Right ventricle myocardium inferior (tissue), 1 donor: ENCODE measurements at regions of chr7 and their contacts with region 1.

Region 1: DNA sequence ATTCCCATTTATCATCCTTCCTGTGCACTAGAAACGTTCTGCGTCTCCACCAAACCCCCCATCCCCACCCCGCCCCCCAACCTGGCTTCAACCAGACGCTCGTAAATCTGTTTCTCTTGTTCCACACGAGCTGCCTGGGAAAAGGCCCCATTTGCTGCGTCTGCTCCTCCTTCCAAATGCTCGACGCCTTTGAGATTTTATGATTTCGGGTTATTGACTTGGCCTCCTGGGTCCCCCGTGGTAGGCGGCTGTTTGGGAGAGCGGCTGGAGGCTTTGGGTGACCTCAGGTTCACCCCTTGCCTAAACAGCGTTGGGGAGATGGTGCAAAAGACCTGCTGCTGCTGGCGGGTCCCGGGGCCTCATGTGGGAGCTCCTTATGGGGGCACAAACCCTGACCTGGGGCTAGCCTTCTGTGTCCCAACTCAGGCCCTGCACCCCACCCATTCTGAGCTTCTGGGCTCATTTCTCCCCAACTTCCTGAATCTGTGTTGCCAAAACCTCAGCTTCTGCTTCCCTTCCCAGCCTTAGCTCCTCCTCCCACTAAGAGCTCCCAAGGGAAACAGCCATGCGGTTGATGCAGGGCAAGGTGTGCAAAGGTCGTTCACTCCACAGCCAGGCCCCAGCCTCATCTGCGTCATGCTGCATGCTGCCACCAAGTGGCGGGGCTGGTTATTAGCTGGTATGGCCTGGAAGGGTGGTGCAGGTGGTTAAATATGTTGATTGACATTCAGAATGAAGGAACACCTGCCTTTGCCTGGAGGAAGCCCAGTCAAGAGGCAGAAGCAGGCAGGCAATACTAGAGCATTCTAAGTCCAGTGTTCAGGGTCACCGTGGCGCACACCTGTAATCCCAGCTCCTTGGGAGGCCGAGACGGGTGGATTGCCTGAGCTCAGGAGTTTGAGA is 49.1 kb upstream of the ELN start:
- DNase-seq: no peak
- ATAC-seq: no peak

Region 2: GRCh38 chr7:73918926-73919693 is 59.8 kb before region 1 on chr7:
- intact Hi-C with region 1: loop called (anchors 10 kb)
- DNase-seq: no peak
- ATAC-seq: no peak